HEK293T (cell line): ENCODE measurements at regions of chr1 and their contacts with region 1.

Region 1: DNA sequence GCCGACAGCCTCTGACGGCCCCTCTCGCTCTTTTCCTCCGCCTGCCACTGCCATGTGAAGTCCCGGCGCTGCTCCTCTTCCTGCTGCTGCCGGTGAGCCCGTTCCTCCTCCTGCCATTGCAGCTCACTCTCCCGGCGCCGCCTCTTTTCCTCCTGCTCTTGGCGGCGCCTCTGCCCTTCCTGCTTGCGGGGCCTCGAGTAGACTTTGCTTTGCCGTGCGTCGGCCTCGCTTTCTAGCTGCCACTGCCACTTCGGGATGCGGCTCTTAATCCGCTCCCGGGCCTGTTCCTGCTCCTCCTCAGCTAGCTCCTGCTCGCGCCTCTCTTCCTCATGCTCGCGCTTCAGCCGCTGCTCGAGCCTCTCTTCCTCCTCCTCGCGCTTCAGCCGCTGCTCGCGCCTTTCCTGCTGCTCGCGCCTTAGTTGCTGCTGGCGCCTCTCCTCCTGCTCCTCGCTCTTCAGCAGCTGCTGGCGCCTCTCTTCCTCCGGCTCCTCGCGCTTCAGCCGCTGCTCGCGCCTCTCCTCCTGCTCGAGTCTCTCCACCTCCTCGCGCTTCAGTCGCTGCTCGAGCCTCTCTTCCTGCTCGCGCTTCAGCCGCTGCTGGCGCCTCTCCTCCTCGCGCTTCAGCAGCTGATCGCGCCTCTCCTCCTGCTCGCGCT is 4.3 kb downstream of the TCHH start:
- DNase-seq: peak; percentile 34

Region 2: DNA sequence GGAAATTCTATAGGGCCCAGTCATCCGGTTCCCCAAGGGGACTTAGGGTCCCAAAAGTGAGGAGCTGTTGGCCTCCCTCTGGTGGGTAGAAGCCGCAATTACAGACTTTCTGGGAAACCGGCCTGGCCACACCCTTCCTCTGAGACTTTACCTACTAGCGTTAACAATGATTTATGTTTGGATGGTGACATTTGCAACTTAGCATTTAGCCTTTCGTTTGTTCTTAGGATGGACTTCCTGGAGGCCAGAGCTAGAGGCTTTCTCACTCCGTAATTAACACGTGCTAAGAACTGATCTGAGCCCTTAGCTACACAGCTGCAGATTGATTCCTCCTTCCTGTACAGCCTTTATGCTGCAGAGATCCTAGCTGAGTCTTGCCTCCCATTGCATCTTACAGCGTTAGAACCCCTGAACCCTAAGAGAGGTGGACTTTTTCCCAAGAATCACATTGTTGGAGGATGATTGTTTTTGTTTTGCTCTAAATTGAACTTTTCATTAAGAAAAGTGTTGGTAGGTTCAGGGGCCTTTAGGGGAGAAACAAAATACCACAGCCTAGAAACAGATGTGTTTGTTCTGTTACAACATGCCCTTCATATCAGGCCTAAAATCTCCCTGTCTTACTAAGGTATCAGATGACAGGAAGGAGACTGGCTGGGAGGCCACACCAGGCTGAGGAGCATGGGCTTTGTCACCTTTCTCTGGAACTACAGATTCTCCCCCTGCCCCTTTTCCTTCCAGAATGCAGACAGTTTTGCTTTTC is 76.2 kb before region 1 on chr1:
- CTCF ChIA-PET with region 1: interaction called, 6 read pairs
- POLR2A ChIA-PET with region 1: interaction called, 23 read pairs
- DNase-seq: peak; percentile 79